Endothelial cell of umbilical vein (primary cell): ENCODE measurements at regions of chr6 and their contacts with region 1.

Region 1: DNA sequence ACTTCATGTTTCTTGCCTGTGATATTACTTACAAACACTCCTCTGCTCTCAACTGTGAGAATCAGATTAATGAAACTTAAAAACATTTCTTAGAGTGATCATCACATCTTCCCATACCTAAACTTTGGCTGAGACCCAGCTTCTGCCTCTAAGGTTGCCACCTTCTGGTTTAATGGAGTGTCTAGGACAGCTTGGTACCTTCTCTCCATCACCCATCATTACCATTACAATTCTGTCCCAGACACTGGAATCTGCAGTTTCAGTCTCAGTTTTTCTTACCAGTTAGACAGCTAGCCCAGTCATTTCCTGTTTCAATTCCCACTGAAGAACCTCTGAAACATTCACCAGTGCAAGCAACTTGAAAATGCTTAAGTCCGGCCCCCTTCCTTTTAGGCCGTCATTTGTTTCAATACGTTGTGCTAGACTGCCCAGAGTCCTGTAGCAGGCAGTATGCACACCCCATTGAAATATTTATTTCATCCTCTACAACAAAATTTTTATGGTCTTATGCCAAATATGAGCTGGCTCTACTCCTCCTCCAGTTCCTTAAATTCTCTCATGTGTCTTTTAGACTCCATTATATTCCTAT is 107.0 kb upstream of the FOXO3 start:
- DNase-seq: peak; percentile 91
- H3K4me3 ChIP-seq: peak overlapping the region in 1 of 3 experiments; percentile 4
- H3K27ac ChIP-seq: peak overlapping the region; percentile 94
- H3K4me1 ChIP-seq: peaks cover 32% of the 10 kb centered on the region
- H3K27me3 ChIP-seq: no peaks in the 10 kb centered on the region
- CTCF ChIP-seq: no peak
- POLR2A ChIP-seq: no peak

Region 2: DNA sequence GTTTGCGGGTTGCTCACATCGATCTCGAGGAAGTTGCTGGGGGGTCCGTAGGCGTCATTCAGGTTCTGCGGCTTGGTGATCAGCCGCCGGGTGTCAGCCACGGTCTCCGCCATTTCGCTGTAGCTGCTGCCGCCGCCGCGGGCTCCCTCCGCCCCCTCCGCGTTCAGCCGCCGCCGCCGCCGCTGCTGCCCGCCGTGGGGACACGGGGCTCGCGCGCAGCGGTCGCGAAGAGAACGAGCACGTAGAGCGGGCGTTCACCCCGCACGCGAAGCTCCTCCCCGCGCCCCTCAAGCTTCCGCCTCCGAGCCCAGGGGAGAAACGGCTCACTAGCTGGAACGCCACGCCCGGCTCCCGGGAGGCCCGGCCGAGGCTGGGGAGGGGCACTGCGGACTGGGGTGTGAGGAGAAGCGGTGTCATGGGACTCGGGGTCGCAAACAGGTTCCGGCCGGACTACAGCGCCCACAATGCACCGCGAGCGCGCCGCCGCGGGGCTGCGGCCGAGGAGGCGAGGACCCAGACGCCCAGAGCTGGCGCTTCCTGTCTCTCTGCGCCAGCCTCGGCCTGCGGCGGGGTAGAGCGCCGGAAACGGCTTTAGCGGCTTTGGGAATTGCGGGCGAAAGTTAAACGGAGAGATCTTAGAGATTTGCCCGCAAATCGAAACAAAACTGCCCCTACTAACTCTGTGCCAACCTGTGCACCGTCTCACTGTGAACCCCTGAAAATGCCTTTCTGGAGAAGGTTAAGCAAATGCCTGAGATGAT is 192.7 kb before region 1 on chr6 and contains the start of gene SNX3:
- CTCF ChIA-PET with region 1: no interaction called
- POLR2A ChIA-PET with region 1: interaction called, 4 read pairs
- dilution Hi-C with region 1: no loop called
- intact Hi-C with region 1: loop called (anchors 1 kb)
- DNase-seq: peak; percentile 98
- H3K4me3 ChIP-seq: peak within 1 kb of the TSS; percentile 81 to 95 (median 85)
- H3K27ac ChIP-seq: peak within 1 kb of the TSS; percentile 59
- H3K4me1 ChIP-seq: peaks cover 14% of the 10 kb centered on the region
- H3K27me3 ChIP-seq: no peaks in the 10 kb centered on the region
- CTCF ChIP-seq: peak in 1 of 2 donors; percentile 2
- POLR2A ChIP-seq: peak; percentile 63
- total RNA-seq, gene SNX3: 141 and 155 TPM in 2 replicates

Region 3: GRCh38 chr6:108294727-108295625 is 158.7 kb before region 1 on chr6 and contains the start of gene AFG1L:
- CTCF ChIA-PET with region 1: no interaction called
- POLR2A ChIA-PET with region 1: no interaction called
- dilution Hi-C with region 1: no loop called
- intact Hi-C with region 1: loop called (anchors 1 kb)
- DNase-seq: peak; percentile 90
- H3K4me3 ChIP-seq: peak within 1 kb of the TSS; percentile 51 to 72 (median 58)
- H3K27ac ChIP-seq: peak within 1 kb of the TSS; percentile 72
- H3K4me1 ChIP-seq: peaks cover 10% of the 10 kb centered on the region
- H3K27me3 ChIP-seq: no peaks in the 10 kb centered on the region
- CTCF ChIP-seq: no peak
- POLR2A ChIP-seq: peak; percentile 49
- total RNA-seq, gene AFG1L: 6.0 and 6.2 TPM in 2 replicates

Region 4: GRCh38 chr6:108417027-108417426 is 36.7 kb before region 1 on chr6:
- CTCF ChIA-PET with region 1: no interaction called
- POLR2A ChIA-PET with region 1: no interaction called
- dilution Hi-C with region 1: no loop called
- intact Hi-C with region 1: no loop called
- DNase-seq: no peak
- H3K4me3 ChIP-seq: no peak overlapping the region
- H3K27ac ChIP-seq: no peak overlapping the region
- H3K4me1 ChIP-seq: no peaks in the 10 kb centered on the region
- H3K27me3 ChIP-seq: no peaks in the 10 kb centered on the region
- CTCF ChIP-seq: no peak
- POLR2A ChIP-seq: no peak

Region 5: DNA sequence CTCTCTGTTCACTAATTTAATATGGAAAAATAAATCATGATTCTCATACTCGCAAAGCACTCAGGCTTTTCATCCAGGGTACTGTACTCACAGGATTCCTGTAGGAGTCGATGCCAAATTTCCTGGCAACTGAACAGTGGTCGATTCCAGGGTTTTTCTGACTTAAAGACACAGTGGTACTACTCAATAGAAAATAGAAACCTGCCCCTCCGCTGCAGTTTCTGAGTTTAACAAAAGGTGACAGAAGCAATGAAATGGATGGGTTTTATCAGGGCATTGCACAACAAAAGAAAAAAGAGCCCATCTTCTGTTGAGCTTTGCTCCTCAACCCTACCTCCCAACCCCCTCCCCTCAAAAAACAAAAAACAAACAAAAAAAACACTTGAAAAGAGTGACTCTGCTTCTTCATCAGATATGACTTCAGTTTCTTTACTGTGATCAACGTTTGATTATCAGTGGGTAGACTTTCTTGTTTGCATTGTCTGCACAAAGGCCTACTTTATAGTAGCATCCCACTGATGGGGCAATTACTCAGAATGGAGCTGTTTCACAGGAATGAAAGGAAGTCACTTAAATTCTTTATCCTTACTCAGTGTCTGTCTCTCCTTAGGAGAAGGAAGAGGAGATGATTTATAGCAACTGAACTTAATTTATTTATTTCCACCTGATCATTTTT is 10.9 kb after region 1 on chr6:
- CTCF ChIA-PET with region 1: interaction called, 6 read pairs
- POLR2A ChIA-PET with region 1: no interaction called
- dilution Hi-C with region 1: no loop called
- intact Hi-C with region 1: loop called (anchors 2 kb)
- DNase-seq: no peak
- H3K4me3 ChIP-seq: no peak overlapping the region
- H3K27ac ChIP-seq: no peak overlapping the region
- H3K4me1 ChIP-seq: peaks cover 6% of the 10 kb centered on the region
- H3K27me3 ChIP-seq: no peaks in the 10 kb centered on the region
- CTCF ChIP-seq: no peak
- POLR2A ChIP-seq: no peak